ENCODE measurements at regions of chr4 and their contacts with region 1.

Region 1: GRCh38 chr4:140049024-140049848 is 104.7 kb downstream of the MAML3 start:
- DNase-seq: no peak
- ATAC-seq: peak; percentile 61
- H3K4me3 ChIP-seq: no peak overlapping the region
- H3K27ac ChIP-seq: no peak overlapping the region
- H3K4me1 ChIP-seq: peaks cover 4% of the 10 kb centered on the region; the same call in 1 of the 2 replicates
- H3K27me3 ChIP-seq: peaks cover 0 to 9% of the 10 kb centered on the region in 2 experiments; a peak in 2 of 4 replicates
- CTCF ChIP-seq: peak in 1 of 3 experiments; percentile 14; a peak in 1 of 6 replicates
- EP300 ChIP-seq: no peak
- POLR2A ChIP-seq: no peak
- RAD21 ChIP-seq: 0 out of 2 replicates have a peak, but pooled peaks have one; percentile 8

Region 2: GRCh38 chr4:139593091-139593564 is 456.1 kb before region 1 on chr4:
- CTCF ChIA-PET with region 1: no interaction called
- POLR2A ChIA-PET with region 1: no interaction called
- RAD21 ChIA-PET with region 1: no interaction called
- SMC1A ChIA-PET with region 1: no interaction called
- in situ Hi-C with region 1: no loop called
- intact Hi-C with region 1: no loop called
- DNase-seq: no peak
- ATAC-seq: no peak
- H3K4me3 ChIP-seq: no peak overlapping the region
- H3K27ac ChIP-seq: no peak overlapping the region
- H3K4me1 ChIP-seq: no peaks in the 10 kb centered on the region
- H3K27me3 ChIP-seq: peaks cover 0 to 2% of the 10 kb centered on the region in 2 experiments; a peak in 2 of 4 replicates
- CTCF ChIP-seq: no peak
- EP300 ChIP-seq: no peak
- POLR2A ChIP-seq: no peak
- RAD21 ChIP-seq: no peak

Region 3: DNA sequence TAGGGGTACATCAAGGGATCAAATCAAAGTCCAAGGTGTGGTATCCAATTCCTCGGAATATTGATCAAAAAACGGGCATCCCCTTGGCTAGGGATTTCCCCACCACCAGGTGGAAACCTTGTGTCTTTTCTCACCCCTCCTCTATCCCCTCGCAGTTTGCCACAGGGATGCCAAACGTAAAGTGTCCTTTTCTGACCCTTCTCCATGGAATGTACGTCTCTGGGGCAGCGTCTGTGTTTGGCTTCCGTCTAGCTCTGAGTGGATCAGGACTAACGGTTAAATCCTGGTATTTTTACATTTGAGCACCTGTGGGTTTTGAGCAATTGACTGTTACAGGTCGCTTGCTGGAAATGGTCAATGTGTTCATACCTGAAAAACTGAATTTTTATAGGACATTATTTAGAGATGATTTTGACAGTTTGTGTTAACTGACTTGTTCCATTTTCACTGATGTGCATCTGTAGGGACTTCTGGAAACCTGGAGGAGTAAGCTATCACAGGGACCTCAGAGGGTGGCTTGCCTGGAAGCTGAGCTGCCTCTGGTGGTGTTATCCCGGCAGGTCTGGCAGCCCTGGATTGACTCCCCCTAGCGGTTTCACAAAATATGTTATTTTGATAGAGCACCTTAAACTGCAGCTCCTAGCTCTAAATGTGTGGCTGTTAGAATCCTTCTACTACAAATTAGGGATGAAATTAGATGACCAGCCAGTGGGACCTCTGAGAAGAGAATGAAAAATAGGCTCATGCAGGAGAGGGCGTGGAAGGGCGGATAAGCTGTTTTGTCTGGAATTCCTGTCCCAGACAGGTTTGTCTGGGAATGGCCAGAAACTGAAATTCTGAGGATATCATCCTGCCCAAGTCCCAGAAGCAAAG is 392.4 kb before region 1 on chr4:
- CTCF ChIA-PET with region 1: interaction called, 3 read pairs
- POLR2A ChIA-PET with region 1: no interaction called
- RAD21 ChIA-PET with region 1: no interaction called
- SMC1A ChIA-PET with region 1: interaction called, 3 read pairs
- in situ Hi-C with region 1: no loop called
- intact Hi-C with region 1: loop called (anchors 2 kb)
- DNase-seq: no peak
- ATAC-seq: peak; percentile 93
- H3K4me3 ChIP-seq: no peak overlapping the region
- H3K27ac ChIP-seq: no peak overlapping the region
- H3K4me1 ChIP-seq: no peaks in the 10 kb centered on the region; the same call in 1 of the 2 replicates
- H3K27me3 ChIP-seq: 0 out of 4 replicates have a peak, but pooled peaks cover 0 to 3% of the 10 kb centered on the region in 2 experiments
- CTCF ChIP-seq: peak; percentile 69 to 84 (median 73)
- EP300 ChIP-seq: no peak
- POLR2A ChIP-seq: no peak
- RAD21 ChIP-seq: peak; percentile 17; the same call in 1 of the 2 replicates

Region 4: DNA sequence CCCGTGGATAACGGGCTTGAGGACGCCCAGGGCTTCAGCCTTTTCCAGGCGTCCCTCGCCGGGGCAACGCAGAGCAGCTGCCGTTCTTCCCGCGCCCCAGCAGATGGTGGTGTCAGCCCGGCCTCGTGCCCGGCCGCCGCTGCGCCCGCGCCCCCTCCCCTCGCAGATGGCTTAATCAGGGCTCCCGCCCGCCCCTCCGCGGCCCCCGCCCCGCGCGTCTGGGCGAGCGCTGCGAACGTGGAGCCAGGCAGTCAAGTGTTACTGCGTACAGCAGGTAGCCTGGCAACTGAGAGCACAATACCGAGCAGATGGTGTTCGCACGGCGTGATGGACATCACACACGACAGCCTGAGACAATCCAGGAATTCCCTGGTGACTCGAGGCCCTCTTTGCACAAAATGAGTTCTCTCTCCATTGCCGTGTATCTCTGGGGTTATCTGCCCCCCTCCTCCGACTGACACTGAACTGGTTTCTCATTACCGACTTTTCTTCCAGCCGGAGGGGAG is 314.3 kb before region 1 on chr4:
- CTCF ChIA-PET with region 1: no interaction called
- POLR2A ChIA-PET with region 1: no interaction called
- RAD21 ChIA-PET with region 1: interaction called, 3 read pairs
- SMC1A ChIA-PET with region 1: no interaction called
- in situ Hi-C with region 1: no loop called
- intact Hi-C with region 1: loop called (anchors 10 kb)
- DNase-seq: no peak
- ATAC-seq: peak; percentile 84
- H3K4me3 ChIP-seq: no peak overlapping the region
- H3K27ac ChIP-seq: no peak overlapping the region
- H3K4me1 ChIP-seq: no peaks in the 10 kb centered on the region
- H3K27me3 ChIP-seq: peaks cover 6 to 24% of the 10 kb centered on the region in 2 experiments
- CTCF ChIP-seq: peak; percentile 17 to 49 (median 49); a peak in 5 of 6 replicates
- EP300 ChIP-seq: no peak
- POLR2A ChIP-seq: no peak
- RAD21 ChIP-seq: peak; percentile 47

Region 5: DNA sequence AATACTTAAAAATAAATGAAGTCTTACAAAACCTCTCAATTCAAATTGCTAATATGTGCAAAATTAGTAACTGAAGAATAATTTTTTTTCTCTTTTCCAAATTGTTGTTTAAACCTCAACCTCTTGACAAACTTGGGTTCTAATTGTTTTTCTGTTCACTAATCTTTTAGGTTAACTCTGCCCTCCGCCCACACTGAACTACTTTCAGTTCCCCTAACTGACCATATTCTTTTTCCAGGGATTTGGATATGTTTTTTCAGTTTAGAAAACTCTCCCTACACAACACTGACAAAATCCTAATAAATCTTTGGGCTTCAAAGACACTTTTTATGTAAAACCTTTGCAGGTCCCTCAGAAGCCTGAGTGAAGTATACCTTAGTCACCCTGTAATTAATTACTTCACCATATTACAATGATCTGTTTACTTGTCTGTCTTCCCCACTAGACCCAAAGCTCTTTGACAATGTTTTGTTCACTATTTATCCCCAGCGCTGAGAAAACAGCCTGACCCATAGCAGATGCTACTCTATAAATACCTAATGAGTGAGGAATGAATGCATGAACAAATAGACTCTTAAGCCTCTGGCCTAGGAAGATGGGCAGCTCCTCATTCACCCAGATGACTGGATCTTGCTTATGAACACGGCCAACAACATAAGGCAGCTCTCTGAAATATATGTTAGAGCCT is 30.2 kb before region 1 on chr4:
- CTCF ChIA-PET with region 1: no interaction called
- POLR2A ChIA-PET with region 1: no interaction called
- RAD21 ChIA-PET with region 1: no interaction called
- SMC1A ChIA-PET with region 1: no interaction called
- in situ Hi-C with region 1: no loop called
- intact Hi-C with region 1: no loop called
- DNase-seq: no peak
- ATAC-seq: no peak; the same call in 2 of the 3 replicates
- H3K4me3 ChIP-seq: no peak overlapping the region
- H3K27ac ChIP-seq: no peak overlapping the region
- H3K4me1 ChIP-seq: no peaks in the 10 kb centered on the region
- H3K27me3 ChIP-seq: no peaks in the 10 kb centered on the region
- CTCF ChIP-seq: no peak
- EP300 ChIP-seq: no peak
- POLR2A ChIP-seq: no peak
- RAD21 ChIP-seq: no peak

Region 6: DNA sequence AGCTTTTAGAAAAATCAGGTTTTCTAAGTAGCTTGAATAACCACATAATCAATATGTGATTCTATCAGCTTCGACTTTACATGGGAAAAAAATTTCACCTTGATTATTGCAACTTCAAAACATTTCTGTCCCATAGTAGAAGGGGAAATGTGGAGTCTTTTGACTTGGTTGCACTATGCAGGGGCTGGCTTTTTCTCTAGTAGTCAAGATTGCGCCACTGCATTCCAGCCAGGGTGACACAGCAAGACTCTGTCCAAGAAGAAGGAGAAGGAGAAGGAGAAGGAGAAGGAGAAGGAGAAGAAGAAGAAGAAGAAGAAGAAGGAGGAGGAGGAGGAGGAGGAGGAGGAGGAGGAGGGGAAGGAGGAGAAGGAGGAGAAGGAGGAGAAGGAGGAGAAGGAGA is 19.8 kb after region 1 on chr4:
- CTCF ChIA-PET with region 1: interaction called, 12 read pairs
- POLR2A ChIA-PET with region 1: interaction called, 5 read pairs
- RAD21 ChIA-PET with region 1: no interaction called
- SMC1A ChIA-PET with region 1: no interaction called
- in situ Hi-C with region 1: no loop called
- intact Hi-C with region 1: no loop called
- DNase-seq: no peak
- ATAC-seq: no peak
- H3K4me3 ChIP-seq: no peak overlapping the region
- H3K27ac ChIP-seq: no peak overlapping the region
- H3K4me1 ChIP-seq: peaks cover 5% of the 10 kb centered on the region; the same call in 1 of the 2 replicates
- H3K27me3 ChIP-seq: peaks cover 0 to 4% of the 10 kb centered on the region in 2 experiments; a peak in 2 of 4 replicates
- CTCF ChIP-seq: no peak
- EP300 ChIP-seq: no peak
- POLR2A ChIP-seq: no peak
- RAD21 ChIP-seq: no peak